ENCODE measurements at regions of chr6 and their contacts with region 1.

Region 1: GRCh38 chr6:36594029-36594815 is at the start of gene SRSF3:
- DNase-seq: peak; percentile 87
- ATAC-seq: peak; percentile 91
- H3K4me3 Mint-ChIP-seq: peak within 1 kb of the TSS; percentile 96
- H3K27ac Mint-ChIP-seq: peak within 1 kb of the TSS; percentile 99
- H3K4me1 Mint-ChIP-seq: peaks cover 51% of the 10 kb centered on the region
- H3K27me3 Mint-ChIP-seq: no peaks in the 10 kb centered on the region
- CTCF ChIP-seq: no peak
- total RNA-seq, gene SRSF3: 421 and 494 TPM in 2 replicates

Region 2: DNA sequence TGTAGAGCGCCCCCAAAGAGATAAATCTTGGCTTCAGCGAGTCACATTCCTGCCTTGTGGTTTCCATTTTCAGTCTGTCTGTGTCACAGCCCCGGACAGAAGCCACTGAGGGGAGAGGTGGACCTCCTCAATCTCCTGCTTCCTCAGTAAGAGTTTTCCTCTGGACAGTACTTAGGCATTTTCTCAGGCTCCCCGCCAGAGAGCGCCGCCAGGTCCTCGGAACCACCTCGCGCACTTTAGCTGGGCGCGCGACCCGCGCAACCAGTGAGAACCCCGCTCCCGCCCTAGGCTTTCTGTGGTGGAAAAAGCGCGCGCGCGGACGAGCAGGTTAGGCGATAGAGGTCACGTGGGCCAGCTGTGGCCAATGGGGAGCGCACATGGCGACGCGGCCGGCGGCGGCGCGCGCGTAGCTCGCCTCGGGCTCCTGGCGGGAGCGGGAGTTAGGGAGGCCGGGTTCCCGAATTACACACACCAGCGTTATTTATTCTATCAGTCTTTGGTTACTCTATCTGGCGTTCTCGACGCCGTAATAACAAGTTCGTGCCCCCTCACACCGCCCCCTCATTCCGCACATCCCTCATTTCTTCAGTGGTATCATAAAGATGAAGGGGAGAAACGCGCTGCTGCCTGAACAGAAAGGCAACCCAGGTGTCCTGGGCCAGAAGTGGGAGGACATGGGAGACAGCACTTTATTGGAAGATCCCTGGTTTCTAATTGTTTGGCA is 171.0 kb before region 1 on chr6:
- CTCF ChIA-PET with region 1: interaction called, 4 read pairs
- POLR2A ChIA-PET with region 1: interaction called, 7 read pairs
- intact Hi-C with region 1: loop called (anchors 1 kb)
- DNase-seq: peak; percentile 91
- ATAC-seq: peak; percentile 95
- H3K4me3 Mint-ChIP-seq: peak overlapping the region; percentile 94
- H3K27ac Mint-ChIP-seq: peak overlapping the region; percentile 89
- H3K4me1 Mint-ChIP-seq: peaks cover 16% of the 10 kb centered on the region
- H3K27me3 Mint-ChIP-seq: no peaks in the 10 kb centered on the region
- CTCF ChIP-seq: no peak

Region 3: DNA sequence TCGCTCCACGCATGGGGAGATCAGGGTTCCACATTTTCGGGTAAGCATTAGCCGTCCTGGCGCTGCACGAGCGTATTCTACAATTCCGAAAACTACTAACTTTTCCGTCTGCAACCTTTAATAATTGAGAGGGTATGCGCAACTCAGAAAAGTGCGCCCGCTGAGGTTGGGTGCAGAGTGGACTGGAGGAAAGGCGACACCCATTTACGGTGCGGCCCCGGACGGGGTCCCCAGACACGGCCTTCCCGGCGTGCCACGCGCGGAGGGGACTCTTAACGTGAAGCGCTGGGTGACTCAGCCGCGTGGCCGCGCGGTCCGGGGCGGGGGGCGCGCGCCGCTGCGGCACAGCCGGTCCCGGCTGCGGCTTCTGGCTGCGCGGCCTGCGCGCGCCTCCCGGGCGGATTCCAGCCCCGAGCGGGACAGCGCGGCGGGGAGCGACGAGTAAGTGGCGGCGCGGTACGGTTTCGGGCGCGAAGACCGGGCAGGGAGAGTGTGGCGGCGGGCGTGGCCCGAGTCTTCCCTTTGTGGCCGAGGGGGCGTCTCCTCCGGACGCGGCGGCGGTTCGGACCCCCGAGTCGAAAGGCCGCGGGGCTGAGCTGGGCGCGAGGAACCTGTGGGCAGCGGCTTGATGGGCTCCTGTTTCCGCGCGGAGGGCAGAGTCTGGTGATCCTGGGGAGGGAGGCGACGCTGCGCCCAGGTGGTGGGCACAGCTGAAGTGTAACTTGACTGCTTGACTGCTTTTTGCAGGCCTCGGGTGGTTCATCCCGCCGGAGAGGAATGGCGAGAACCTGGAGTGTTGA is 151.4 kb before region 1 on chr6 and contains the starts of genes KCTD20 and PXT1:
- CTCF ChIA-PET with region 1: no interaction called
- POLR2A ChIA-PET with region 1: interaction called, 6 read pairs
- intact Hi-C with region 1: loop called (anchors 1 kb)
- DNase-seq: peak; percentile 85
- ATAC-seq: peak; percentile 84
- H3K4me3 Mint-ChIP-seq: peak within 1 kb of the TSS; percentile 98
- H3K27ac Mint-ChIP-seq: peak within 1 kb of the TSS; percentile 96
- H3K4me1 Mint-ChIP-seq: peaks cover 46% of the 10 kb centered on the region
- H3K27me3 Mint-ChIP-seq: no peaks in the 10 kb centered on the region
- CTCF ChIP-seq: no peak
- total RNA-seq, gene KCTD20: 45.5 and 48.1 TPM in 2 replicates
- total RNA-seq, gene PXT1: 0.11 and 0.22 TPM in 2 replicates

Region 4: DNA sequence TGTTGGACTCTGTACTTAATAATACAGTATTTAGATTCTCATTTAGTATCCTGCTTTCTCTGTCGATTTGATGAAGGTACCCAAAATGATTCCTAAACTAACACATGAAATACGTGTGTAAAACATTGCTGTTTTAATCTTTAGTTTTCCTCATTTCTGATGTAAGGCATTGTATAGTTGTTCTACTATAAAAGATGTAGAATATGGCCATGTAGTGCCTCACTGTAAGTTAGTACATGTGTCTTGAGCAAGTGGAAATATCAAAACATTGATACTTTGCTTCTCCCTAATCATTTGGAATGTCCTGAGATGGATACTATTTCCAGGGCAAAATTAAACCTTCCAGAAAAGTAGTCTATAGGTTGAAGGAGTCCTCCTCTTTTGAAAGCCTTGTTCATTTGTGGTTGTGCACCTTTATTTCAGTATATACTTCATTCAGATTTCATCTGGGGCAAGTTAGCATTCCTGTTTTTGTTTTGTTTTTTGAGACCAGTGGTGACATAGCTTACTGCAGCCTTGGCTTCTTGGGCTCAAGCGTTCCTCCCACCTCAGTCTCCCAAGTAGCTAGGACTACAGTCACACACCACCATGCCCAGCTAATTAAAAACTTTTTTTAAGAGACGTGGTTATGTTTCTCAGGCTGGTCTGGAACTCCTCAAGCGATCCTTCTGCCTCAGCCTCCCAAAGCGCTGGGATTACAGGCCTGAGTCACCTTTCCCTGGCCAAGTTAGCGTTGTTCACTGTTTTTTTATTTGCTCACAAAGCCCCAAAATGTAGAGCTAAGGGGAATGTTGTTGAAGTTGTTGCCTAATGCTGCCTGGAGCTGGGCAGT is 11.6 kb after region 1 on chr6:
- CTCF ChIA-PET with region 1: interaction called, 5 read pairs
- POLR2A ChIA-PET with region 1: interaction called, 83 read pairs
- intact Hi-C with region 1: no loop called
- DNase-seq: no peak
- ATAC-seq: no peak
- H3K4me3 Mint-ChIP-seq: no peak overlapping the region
- H3K27ac Mint-ChIP-seq: peak overlapping the region; percentile 50
- H3K4me1 Mint-ChIP-seq: peaks cover 72% of the 10 kb centered on the region
- H3K27me3 Mint-ChIP-seq: no peaks in the 10 kb centered on the region
- CTCF ChIP-seq: no peak

Region 5: GRCh38 chr6:36885461-36886401 is 291.5 kb after region 1 on chr6 and contains the start of gene C6orf89:
- CTCF ChIA-PET with region 1: no interaction called
- POLR2A ChIA-PET with region 1: no interaction called
- intact Hi-C with region 1: no loop called
- DNase-seq: peak; percentile 89
- ATAC-seq: peak; percentile 99
- H3K4me3 Mint-ChIP-seq: peak within 1 kb of the TSS; percentile 89
- H3K27ac Mint-ChIP-seq: peak within 1 kb of the TSS; percentile 94
- H3K4me1 Mint-ChIP-seq: peaks cover 30% of the 10 kb centered on the region
- H3K27me3 Mint-ChIP-seq: no peaks in the 10 kb centered on the region
- CTCF ChIP-seq: peak; percentile 34
- total RNA-seq, gene C6orf89: 29.7 and 30.3 TPM in 2 replicates